Activated T-helper 2 cell treated with anti-CD3 and anti-CD28 coated beads, Interferon-gamma antibody, Interleukin-2, Interleukin-4, amounts not matched to agents 10 μg/mL and 5 μg/mL and 100 μg/mL, durations not matched to agents 14 hours and 24 hours and 36 hours (primary cell): ENCODE measurements at regions of chr1 and their contacts with region 1.

Region 1: DNA sequence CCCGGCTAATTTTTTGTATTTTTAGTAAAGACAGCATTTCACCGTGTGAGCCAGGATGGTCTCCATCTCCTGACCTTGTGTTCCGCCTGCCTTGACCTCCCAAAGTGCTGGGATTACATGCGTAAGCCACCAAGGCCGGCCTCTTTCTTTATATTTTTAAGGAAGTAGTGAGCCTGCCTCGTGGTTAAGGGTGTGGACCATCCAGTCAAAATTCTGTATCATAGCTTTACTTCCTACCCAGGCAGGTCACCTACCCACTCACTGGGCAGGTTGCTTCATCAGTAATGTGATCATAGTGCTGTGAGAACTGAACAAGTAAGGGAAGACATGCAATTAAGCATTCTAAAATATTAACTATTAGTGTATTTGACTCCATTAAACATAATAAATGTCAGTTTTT is 8.1 kb upstream of the ACOT7 start:
- DNase-seq: no peak
- H3K4me3 Mint-ChIP-seq: no peak overlapping the region
- H3K27ac Mint-ChIP-seq: no peak overlapping the region
- H3K4me1 Mint-ChIP-seq: no peaks in the 10 kb centered on the region
- H3K27me3 Mint-ChIP-seq: peaks cover 9% of the 10 kb centered on the region

Region 2: DNA sequence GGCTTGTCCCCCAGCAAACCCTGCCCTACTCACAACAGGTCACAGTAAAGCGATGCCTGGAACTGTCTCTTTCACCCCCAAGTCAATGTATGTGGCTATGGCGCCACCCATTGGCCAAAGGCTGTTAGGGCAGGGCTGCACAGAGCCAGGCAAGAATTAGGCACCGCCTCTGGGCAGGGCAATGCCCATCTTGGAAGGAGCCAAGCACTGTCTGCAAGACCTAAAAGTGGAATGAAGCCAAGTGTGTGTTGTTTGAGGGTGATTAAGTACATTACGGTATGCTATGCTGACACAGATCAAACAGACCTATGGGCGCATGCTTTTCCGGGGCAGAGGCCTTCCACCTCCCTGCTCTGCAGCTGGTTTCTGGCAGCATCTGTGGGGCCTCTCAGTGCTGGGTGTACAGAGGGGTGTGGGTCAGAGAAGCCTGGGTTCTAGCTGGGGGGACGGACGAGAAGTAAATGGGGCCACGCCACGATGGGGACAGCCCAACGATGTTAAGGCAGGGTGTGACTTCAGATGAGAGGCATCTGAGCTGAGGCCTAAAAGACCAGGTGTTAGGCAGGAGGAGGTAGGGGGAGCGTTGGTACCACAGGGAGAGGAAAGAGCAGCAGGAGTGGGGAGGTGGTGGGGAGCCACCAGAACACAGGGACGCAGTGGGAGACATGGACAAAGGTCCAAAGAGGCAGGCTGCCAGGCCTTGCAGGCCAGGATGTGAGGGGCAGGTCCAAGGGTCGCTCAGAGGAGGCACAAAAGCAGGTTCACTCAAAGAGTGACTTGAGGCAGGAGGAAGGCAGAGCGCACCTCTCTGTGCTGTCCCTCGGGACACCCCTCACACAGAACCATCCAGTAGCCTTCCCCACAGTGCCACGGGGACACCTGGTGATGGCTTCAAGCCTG is 57.9 kb before region 1 on chr1:
- intact Hi-C with region 1: loop called (anchors 1 kb)
- DNase-seq: peak; percentile 60
- H3K4me3 Mint-ChIP-seq: no peak overlapping the region
- H3K27ac Mint-ChIP-seq: no peak overlapping the region
- H3K4me1 Mint-ChIP-seq: peaks cover 10% of the 10 kb centered on the region
- H3K27me3 Mint-ChIP-seq: no peaks in the 10 kb centered on the region

Region 3: GRCh38 chr1:6359216-6360116 is 42.2 kb before region 1 on chr1:
- intact Hi-C with region 1: loop called (anchors 1 kb)
- DNase-seq: peak; percentile 71
- H3K4me3 Mint-ChIP-seq: peak overlapping the region; percentile 54
- H3K27ac Mint-ChIP-seq: peak overlapping the region; percentile 92
- H3K4me1 Mint-ChIP-seq: peaks cover 39% of the 10 kb centered on the region
- H3K27me3 Mint-ChIP-seq: no peaks in the 10 kb centered on the region

Region 4: DNA sequence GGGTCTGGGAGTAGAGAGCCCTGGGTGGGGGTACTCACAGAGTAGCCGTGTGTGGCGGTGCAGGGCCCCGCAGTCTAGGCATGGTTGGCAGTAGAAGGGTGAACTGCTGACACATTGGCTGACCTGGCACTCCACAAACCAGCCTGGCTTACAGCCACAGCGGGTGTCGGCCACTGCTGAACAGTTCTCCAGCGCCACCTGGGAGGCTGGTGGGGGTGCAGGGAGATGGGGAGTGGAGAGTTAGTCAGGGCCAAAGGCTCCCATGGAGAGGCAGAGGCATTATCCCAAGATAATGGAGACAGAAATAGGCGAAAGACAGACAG is 62.8 kb after region 1 on chr1:
- intact Hi-C with region 1: no loop called
- DNase-seq: no peak
- H3K4me3 Mint-ChIP-seq: peak overlapping the region; percentile 93
- H3K27ac Mint-ChIP-seq: peak overlapping the region; percentile 77
- H3K4me1 Mint-ChIP-seq: peaks cover 35% of the 10 kb centered on the region
- H3K27me3 Mint-ChIP-seq: peaks cover under 1% of the 10 kb centered on the region